Head of caudate nucleus (tissue), 42 donors: ENCODE measurements at regions of chr2 and their contacts with region 1.

Region 1: DNA sequence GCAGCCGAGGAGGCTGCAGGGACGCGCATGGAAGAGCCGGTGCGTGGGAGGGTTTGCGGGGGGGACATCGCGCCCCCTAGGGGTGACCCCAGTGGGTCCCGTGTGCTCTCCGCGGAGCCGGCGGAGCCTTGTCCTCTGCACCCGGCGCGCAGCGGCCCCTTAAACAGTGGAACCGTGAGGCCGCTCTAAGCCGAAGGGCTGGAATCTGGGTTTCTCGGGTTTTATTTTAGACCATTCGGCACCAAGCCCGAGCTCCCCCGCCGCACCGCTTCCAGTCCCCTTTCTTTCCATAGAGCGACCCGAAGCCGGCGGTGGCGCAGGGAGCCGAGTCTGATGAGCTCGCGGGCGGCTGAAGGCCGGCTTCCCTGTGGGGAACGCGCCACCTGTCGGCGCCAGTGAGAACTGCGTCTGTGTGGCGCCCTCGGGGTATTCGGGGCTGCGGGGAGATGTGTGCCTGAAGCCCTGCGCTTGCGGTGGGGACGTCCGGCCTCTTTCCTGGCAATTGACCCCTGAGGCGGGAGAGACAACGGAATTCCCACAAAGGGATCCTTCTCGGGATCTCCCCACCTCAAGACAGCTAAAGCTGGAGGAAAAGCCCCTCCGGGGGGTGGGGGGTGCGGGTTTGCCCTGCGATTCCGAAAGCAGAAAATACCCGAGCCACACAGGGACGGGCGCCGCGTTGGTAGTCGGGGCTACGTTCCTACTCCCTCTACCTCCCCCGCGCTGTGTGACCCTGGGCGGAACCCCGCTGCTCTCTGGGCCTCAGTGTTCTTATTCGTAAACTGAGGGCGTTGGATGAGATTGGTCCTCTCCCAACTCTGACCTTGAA is 8.2 kb upstream of the EN1 start:
- DNase-seq: peak; percentile 59 to 93 (median 85)

Region 2: GRCh38 chr2:118046634-118047210 is 808.9 kb before region 1 on chr2:
- intact Hi-C with region 1: loop called (anchors 5 kb)
- DNase-seq: peak in 1 of 42 donors; percentile 22

Region 3: DNA sequence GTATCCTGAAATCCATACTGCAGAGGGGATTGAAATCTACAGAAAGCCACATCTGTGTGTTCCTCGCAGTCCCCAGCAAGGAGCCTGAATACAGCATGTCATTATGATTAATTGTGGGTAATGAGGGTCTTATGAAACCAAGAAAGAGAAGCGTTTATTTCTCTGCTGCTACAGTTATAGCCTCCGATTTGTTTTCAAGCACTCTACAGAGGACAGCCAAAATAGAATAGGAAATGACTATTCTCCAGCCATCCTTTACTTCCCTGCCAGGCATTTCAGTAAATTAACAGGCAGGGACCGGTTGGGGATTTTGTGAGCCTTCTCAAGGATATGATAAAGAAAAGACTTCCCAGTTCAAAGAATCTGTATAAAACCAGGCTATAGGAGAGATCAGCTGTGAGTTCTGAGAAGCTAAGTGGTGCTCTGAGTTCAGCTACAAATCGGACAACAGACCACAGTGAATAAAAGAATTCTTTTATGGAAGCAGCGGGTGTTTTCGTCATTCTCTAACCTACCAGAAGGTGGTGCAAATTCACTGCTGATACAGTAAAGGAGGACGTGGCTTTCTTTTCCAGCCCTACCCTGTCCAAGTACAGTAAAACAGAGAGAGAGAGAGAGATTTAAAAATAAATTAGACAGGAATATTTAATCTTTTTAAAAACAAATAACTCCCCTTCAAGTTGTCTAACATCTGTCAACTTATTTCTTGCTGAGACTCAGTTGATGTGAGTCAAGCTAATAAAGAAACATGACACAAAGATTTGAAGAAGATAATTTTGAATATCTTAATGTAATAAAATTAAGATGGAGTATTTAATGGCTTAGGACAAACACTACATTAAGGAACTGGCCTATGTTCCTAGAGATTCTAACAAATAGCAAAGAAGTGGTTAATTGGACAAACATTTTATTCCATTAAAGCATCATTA is 633.7 kb before region 1 on chr2:
- intact Hi-C with region 1: loop called (anchors 5 kb)
- DNase-seq: peak in 23 of 42 donors; percentile 10 to 76 (median 44)